Right cardiac atrium (tissue), 5 donors: ENCODE measurements at regions of chr11 and their contacts with region 1.

Region 1: DNA sequence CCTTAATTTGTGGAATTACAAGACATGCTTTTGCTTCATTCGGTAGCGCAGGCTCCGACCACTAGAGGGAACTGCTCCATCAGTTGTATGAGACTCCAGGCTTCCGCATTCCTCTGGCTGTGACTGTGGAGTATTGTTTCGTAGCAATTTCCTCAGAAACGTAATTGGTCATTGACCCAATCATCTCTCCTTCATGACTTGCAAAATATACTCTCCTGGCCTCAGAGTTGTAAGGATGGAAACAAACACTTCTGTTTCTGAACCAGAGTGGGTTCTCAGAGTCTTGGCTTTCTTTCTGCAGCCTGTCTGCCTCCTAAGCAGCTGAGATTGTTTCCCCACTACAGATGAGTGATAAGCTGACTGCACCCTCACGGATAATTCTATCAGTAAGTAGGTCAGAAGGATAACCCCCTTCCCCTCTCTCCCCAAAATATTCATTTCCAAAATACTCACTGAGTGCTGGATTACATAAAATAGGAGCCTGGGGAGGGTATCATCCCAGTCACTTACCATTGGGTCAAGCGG is 146.8 kb upstream of the ZC3H12C start:
- DNase-seq: peak; percentile 89 to 95 (median 91)
- ATAC-seq: peak; percentile 99
- H3K4me3 ChIP-seq: peak overlapping the region; percentile 72
- H3K27ac ChIP-seq: peak overlapping the region; percentile 82
- H3K4me1 ChIP-seq: no peaks in the 10 kb centered on the region
- H3K27me3 ChIP-seq: no peaks in the 10 kb centered on the region

Region 2: DNA sequence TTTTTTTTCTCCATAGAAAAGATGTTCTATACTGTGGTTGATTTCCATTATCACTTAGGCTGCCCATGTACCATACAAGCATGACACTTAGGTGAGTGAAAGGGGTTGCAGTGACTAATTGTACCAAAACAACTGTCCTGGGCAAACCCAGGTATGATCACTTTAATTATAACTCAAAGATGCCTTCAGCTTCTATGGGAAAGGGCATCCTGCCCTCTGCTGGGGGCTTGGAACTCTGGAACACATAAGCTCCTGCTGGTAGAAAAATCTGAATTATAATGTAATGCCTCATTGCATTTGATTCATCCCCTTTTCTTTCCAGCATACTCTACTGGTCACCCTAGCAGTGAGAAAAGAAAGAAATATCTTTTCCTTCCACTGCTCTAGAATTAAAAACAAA is 1075.2 kb before region 1 on chr11:
- intact Hi-C with region 1: no loop called
- DNase-seq: peak in 2 of 3 donors; percentile 50 to 76
- ATAC-seq: peak; percentile 29 to 49
- H3K4me3 ChIP-seq: no peak overlapping the region
- H3K27ac ChIP-seq: no peak overlapping the region
- H3K4me1 ChIP-seq: no peaks in the 10 kb centered on the region
- H3K27me3 ChIP-seq: no peaks in the 10 kb centered on the region

Region 3: GRCh38 chr11:110092515-110093404 is 146.4 kb after region 1 on chr11 and contains the start of gene ZC3H12C:
- intact Hi-C with region 1: loop called in 3 of 4 experiments (anchors 5 to 10 kb)
- DNase-seq: peak; percentile 84 to 93 (median 93)
- ATAC-seq: peak; percentile 86 to 93
- H3K4me3 ChIP-seq: peak within 1 kb of the TSS; percentile 85
- H3K27ac ChIP-seq: peak within 1 kb of the TSS; percentile 95
- H3K4me1 ChIP-seq: no peaks in the 10 kb centered on the region
- H3K27me3 ChIP-seq: no peaks in the 10 kb centered on the region
- total RNA-seq, gene ZC3H12C: 13.6 to 17.2 (median 14.7) TPM

Region 4: DNA sequence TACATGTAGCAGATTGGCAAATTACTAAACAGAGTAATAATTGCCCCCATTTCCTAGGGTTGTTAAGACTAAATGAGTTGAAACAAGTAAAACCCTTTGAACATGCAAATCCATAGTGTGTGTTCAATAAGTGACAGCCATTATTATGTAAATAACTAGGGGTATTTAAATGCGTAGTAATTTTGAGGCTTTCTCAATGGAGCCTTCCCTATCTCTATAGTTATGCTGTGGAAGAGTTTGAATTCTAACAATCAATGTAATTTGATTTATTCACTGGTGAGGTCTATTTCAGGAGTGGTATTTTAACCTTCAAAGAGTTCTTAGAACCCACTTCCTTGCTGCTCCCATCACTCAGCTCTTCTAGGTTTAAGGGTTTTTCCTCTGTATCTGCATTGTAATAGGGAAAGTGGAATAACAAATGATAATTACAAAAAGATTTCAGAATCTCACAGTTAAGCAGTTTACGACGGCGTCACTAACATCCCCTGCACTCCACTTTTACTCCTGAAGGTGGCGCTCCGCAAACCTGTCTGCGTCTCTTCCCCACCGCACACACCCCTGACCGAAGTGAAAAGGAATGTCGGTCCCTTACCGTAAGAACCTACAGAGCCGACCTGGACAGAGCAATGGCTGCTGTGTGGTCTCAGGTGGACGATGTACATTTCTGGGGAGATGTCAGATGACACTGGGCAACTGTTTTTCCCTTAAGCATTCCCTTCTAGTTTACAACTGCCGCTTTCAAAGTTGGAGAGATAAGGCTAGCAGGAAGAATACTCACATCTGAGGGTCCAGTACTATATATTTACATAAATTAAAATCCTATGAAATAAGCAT is 227.6 kb after region 1 on chr11:
- intact Hi-C with region 1: loop called in 2 of 4 experiments (anchors 10 kb)
- DNase-seq: peak; percentile 67 to 85 (median 75)
- ATAC-seq: peak; percentile 71 to 83
- H3K4me3 ChIP-seq: peak overlapping the region; percentile 12
- H3K27ac ChIP-seq: no peak overlapping the region
- H3K4me1 ChIP-seq: no peaks in the 10 kb centered on the region
- H3K27me3 ChIP-seq: no peaks in the 10 kb centered on the region

Region 5: GRCh38 chr11:110376711-110377324 is 430.4 kb after region 1 on chr11:
- intact Hi-C with region 1: loop called in 1 of 4 experiments (anchors 10 kb)
- DNase-seq: peak; percentile 82 to 87 (median 83)
- ATAC-seq: peak; percentile 91 to 94
- H3K4me3 ChIP-seq: no peak overlapping the region
- H3K27ac ChIP-seq: no peak overlapping the region
- H3K4me1 ChIP-seq: peaks cover 1% of the 10 kb centered on the region
- H3K27me3 ChIP-seq: no peaks in the 10 kb centered on the region